CD8-positive, alpha-beta T cell (primary cell): ENCODE measurements at regions of chr19 and their contacts with region 1.

Region 1: DNA sequence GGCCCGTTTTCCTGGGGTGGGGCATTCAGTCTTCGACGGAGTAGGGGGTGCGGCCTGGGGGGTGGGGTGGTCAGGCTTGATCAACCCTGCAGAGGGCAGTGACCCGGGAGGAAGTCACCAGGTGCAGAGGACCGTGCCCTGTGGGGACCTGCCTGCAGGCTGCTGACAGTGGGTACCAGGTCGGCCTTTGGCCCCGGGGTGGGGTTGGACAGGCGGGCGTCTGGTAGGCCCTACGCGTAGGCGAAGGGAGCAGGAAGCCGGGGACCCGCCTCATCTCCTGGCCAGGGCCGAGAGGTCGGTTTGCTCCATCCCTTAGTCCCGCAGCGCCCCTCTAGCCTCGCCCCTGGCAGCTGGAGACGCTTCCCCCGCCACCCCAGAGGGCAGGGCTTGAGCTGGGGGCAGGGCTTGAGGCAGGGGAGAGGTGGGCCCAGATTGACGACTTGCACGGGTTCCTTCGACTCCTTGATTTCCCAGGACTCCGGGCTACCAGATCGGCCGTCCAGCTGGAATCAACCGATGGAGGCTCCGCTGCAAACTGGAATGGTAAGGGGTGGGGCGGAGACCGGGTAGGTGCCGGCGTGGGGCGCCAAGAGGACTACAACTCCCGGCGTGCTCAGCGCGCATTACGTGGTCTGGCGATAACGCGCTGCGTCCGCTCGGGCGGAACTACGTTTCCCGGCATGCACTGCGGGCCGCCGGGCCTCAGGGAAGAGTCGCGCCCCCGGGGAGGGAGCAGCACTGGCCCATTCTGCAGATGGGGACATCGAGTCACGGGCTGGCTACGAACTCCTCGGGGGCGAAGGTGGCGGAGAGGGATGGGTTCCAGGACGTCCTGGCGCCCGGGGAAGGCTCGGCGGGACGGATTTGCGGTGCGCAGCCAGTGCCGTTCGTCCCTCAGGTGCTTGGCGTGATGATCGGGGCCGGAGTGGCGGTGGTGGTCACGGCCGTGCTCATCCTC is at the start of gene PNPLA6:
- DNase-seq: peak; percentile 84 to 96 (median 91)
- ATAC-seq: peak; percentile 77
- H3K4me3 ChIP-seq: peak within 1 kb of the TSS; percentile 96 to 100
- H3K4me3 Mint-ChIP-seq: peak within 1 kb of the TSS; percentile 96
- H3K27ac ChIP-seq: peak within 1 kb of the TSS; percentile 63 to 72
- H3K27ac Mint-ChIP-seq: peak within 1 kb of the TSS; percentile 88
- H3K4me1 ChIP-seq: peaks cover 10% of the 10 kb centered on the region
- H3K4me1 Mint-ChIP-seq: peaks cover 22% of the 10 kb centered on the region
- H3K27me3 ChIP-seq: no peaks in the 10 kb centered on the region
- H3K27me3 Mint-ChIP-seq: no peaks in the 10 kb centered on the region
- CTCF ChIP-seq: no peak
- total RNA-seq, gene PNPLA6: 76.5 to 81.3 TPM

Region 2: GRCh38 chr19:6429419-6430221 is 1105.7 kb before region 1 on chr19:
- CTCF ChIA-PET with region 1: no interaction called
- POLR2A ChIA-PET with region 1: no interaction called
- intact Hi-C with region 1: no loop called
- DNase-seq: peak in 1 of 9 experiments; percentile 7
- ATAC-seq: no peak
- H3K4me3 ChIP-seq: no peak overlapping the region
- H3K4me3 Mint-ChIP-seq: no peak overlapping the region
- H3K27ac ChIP-seq: no peak overlapping the region
- H3K27ac Mint-ChIP-seq: no peak overlapping the region
- H3K4me1 ChIP-seq: peaks cover 11% of the 10 kb centered on the region
- H3K4me1 Mint-ChIP-seq: peaks cover 13% of the 10 kb centered on the region
- H3K27me3 ChIP-seq: no peaks in the 10 kb centered on the region
- H3K27me3 Mint-ChIP-seq: no peaks in the 10 kb centered on the region
- CTCF ChIP-seq: no peak

Region 3: GRCh38 chr19:7197760-7198696 is 337.3 kb before region 1 on chr19:
- CTCF ChIA-PET with region 1: no interaction called
- POLR2A ChIA-PET with region 1: no interaction called
- intact Hi-C with region 1: loop called (anchors 5 to 10 kb)
- DNase-seq: peak; percentile 80 to 98 (median 89)
- ATAC-seq: peak; percentile 83
- H3K4me3 ChIP-seq: peak overlapping the region; percentile 67 to 76
- H3K4me3 Mint-ChIP-seq: peak overlapping the region; percentile 90
- H3K27ac ChIP-seq: peak overlapping the region; percentile 73
- H3K27ac Mint-ChIP-seq: peak overlapping the region; percentile 95
- H3K4me1 ChIP-seq: peaks cover 17% of the 10 kb centered on the region
- H3K4me1 Mint-ChIP-seq: peaks cover 14% of the 10 kb centered on the region
- H3K27me3 ChIP-seq: no peaks in the 10 kb centered on the region
- H3K27me3 Mint-ChIP-seq: peaks cover 2% of the 10 kb centered on the region
- CTCF ChIP-seq: no peak

Region 4: DNA sequence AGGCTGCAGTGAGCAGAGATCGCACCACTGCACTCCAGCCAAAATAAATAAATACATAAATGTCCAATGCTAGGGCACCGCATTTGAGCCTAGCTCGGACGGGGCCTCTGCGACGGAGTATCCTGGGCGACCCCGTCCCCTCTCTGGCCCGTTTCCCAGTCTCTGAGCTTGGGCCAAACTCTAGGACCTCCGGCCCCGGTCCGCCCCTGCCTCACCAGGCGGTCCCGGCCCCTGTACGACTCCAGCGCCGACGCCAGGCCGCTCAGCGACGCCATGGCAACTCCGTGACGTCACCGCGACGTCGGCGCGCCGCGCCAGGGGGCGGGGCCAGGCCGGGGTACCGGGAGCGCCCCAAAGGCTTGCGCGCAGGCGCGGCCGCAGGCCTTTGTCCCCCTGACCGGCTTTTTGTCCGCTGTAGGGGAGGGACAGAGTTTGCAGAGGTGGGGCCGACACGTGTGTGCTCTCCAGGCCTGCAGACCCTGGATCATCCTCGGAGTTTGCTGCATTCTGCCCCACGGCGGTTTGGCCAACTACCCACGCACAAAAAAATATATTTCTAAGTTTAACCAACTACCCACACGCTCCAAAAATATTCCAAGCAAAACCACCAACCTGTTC is 46.5 kb before region 1 on chr19 and contains the start of gene PEX11G:
- CTCF ChIA-PET with region 1: no interaction called
- POLR2A ChIA-PET with region 1: no interaction called
- intact Hi-C with region 1: loop called (anchors 1 kb)
- DNase-seq: peak; percentile 81 to 95 (median 90)
- ATAC-seq: peak; percentile 96
- H3K4me3 ChIP-seq: peak within 1 kb of the TSS; percentile 70 to 78
- H3K4me3 Mint-ChIP-seq: peak within 1 kb of the TSS; percentile 92
- H3K27ac ChIP-seq: peak within 1 kb of the TSS; percentile 68 to 77
- H3K27ac Mint-ChIP-seq: peak within 1 kb of the TSS; percentile 94
- H3K4me1 ChIP-seq: peaks cover 9% of the 10 kb centered on the region
- H3K4me1 Mint-ChIP-seq: peaks cover 6% of the 10 kb centered on the region
- H3K27me3 ChIP-seq: no peaks in the 10 kb centered on the region
- H3K27me3 Mint-ChIP-seq: no peaks in the 10 kb centered on the region
- CTCF ChIP-seq: no peak
- total RNA-seq, gene PEX11G: not detected

Region 5: GRCh38 chr19:7522072-7522922 is 13.0 kb before region 1 on chr19 and contains the start of gene MCOLN1:
- CTCF ChIA-PET with region 1: interaction called, 5 read pairs
- POLR2A ChIA-PET with region 1: interaction called, 48 read pairs
- intact Hi-C with region 1: loop called (anchors 1 kb)
- DNase-seq: peak; percentile 98 to 100 (median 100)
- ATAC-seq: peak; percentile 93
- H3K4me3 ChIP-seq: peak within 1 kb of the TSS; percentile 66 to 80
- H3K4me3 Mint-ChIP-seq: peak within 1 kb of the TSS; percentile 85
- H3K27ac ChIP-seq: peak within 1 kb of the TSS in 1 of 2 experiments; percentile 17
- H3K27ac Mint-ChIP-seq: peak within 1 kb of the TSS; percentile 85
- H3K4me1 ChIP-seq: peaks cover 16% of the 10 kb centered on the region
- H3K4me1 Mint-ChIP-seq: peaks cover 15% of the 10 kb centered on the region
- H3K27me3 ChIP-seq: no peaks in the 10 kb centered on the region
- H3K27me3 Mint-ChIP-seq: no peaks in the 10 kb centered on the region
- CTCF ChIP-seq: no peak
- total RNA-seq, gene MCOLN1: 9.0 to 13.3 TPM

Region 6: DNA sequence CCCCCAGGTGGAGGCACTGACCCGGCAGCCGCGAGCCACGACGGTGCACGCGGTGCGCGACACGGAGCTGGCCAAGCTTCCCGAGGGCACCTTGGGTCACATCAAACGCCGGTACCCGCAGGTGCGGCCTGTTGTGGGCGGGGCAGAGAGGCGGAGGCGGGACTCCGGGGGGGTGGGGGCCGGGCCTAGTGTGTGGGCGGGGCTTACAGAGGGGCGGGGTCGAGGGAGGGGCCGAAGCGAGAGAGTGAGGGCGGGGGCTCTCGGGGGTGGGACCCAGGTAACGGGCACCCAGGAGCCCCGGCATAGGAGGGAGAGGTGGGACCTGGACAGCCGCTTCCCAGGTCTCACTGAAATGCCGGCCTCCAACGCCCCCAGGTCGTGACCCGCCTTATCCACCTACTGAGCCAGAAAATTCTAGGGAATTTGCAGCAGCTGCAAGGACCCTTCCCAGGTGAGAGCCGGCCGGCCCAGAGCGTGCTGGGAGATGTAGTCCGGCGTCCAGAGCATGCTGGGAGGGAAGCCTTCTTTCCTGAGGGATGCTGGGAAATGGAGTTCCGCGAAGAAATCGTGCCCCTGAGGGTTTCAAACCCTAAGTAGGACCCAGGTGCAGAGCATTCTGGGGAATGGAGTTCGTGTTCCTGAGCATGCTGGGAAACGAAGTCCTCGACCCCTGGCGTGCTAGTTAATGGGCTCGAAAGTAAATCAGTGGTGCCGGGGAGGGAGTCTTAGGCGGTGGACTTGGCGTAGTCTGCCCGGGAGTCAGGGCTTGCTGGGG is 15.9 kb after region 1 on chr19:
- CTCF ChIA-PET with region 1: no interaction called
- POLR2A ChIA-PET with region 1: no interaction called
- intact Hi-C with region 1: no loop called
- DNase-seq: peak in 5 of 9 experiments; percentile 24 to 56 (median 45)
- ATAC-seq: peak; percentile 84
- H3K4me3 ChIP-seq: no peak overlapping the region
- H3K4me3 Mint-ChIP-seq: no peak overlapping the region
- H3K27ac ChIP-seq: no peak overlapping the region
- H3K27ac Mint-ChIP-seq: no peak overlapping the region
- H3K4me1 ChIP-seq: no peaks in the 10 kb centered on the region
- H3K4me1 Mint-ChIP-seq: peaks cover 8% of the 10 kb centered on the region
- H3K27me3 ChIP-seq: no peaks in the 10 kb centered on the region
- H3K27me3 Mint-ChIP-seq: no peaks in the 10 kb centered on the region
- CTCF ChIP-seq: no peak

Region 7: DNA sequence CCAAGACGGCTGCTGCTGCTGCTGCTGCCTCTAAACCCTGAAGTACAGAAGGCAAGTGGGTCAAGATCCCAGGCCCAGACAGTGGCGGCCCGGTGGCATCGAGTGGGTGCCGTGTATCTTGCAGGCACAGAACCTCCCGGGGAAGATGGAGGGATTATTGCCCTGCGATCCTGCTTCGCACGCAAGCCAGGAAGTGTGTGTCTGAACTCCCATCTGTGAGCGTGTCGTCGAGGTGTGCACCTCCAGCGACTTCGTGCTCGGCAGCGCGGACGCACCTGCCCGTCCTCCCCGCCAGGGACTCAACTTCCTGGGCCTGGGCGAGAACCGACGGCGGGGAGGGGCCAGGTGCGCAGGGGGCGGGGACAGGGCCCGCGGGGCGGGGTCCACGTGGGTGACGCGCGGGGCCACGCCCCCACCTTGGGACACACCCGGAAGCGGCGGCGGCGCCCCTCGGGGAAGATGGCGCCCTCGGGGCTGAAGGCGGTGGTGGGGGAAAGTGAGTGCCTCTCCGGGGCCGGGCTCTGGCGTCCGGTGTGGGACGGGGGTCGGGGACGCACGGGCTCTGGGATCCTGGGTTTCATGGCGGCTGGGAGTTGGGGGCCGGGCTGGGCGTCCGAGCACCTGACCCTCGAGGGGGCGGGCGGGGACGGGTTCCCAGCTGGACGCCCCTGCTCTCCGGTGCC is 101.5 kb after region 1 on chr19 and contains the start of gene STXBP2:
- CTCF ChIA-PET with region 1: no interaction called
- POLR2A ChIA-PET with region 1: no interaction called
- intact Hi-C with region 1: loop called (anchors 2 kb)
- DNase-seq: peak; percentile 89 to 99 (median 94)
- ATAC-seq: peak; percentile 99
- H3K4me3 ChIP-seq: peak within 1 kb of the TSS; percentile 36 to 93
- H3K4me3 Mint-ChIP-seq: peak within 1 kb of the TSS; percentile 85
- H3K27ac ChIP-seq: peak within 1 kb of the TSS; percentile 70 to 97
- H3K27ac Mint-ChIP-seq: peak within 1 kb of the TSS; percentile 91
- H3K4me1 ChIP-seq: peaks cover 24% of the 10 kb centered on the region
- H3K4me1 Mint-ChIP-seq: peaks cover 41% of the 10 kb centered on the region
- H3K27me3 ChIP-seq: no peaks in the 10 kb centered on the region
- H3K27me3 Mint-ChIP-seq: no peaks in the 10 kb centered on the region
- CTCF ChIP-seq: peak; percentile 34
- total RNA-seq, gene STXBP2: 260 to 270 TPM